Uterus (tissue), 4 donors: ENCODE measurements at regions of chr4 and their contacts with region 1.

Region 1: GRCh38 chr4:82900331-82901128 is at the start of gene THAP9:
- DNase-seq: peak; percentile 97 to 98
- H3K4me3 ChIP-seq: peak within 1 kb of the TSS; percentile 68 to 76
- H3K27ac ChIP-seq: peak within 1 kb of the TSS; percentile 97 to 99
- H3K4me1 ChIP-seq: peaks cover 0 to 4% of the 10 kb centered on the region in 2 donors
- H3K27me3 ChIP-seq: no peaks in the 10 kb centered on the region
- CTCF ChIP-seq: peak in 1 of 4 experiments; percentile 11
- POLR2A ChIP-seq: peak; percentile 61 to 75
- total RNA-seq, gene THAP9: 2.3 to 26.9 (median 6.5) TPM

Region 2: GRCh38 chr4:83012687-83013419 is 112.3 kb after region 1 on chr4:
- intact Hi-C with region 1: loop called (anchors 5 kb)
- DNase-seq: peak; percentile 96 to 98
- H3K4me3 ChIP-seq: peak overlapping the region; percentile 36 to 77
- H3K27ac ChIP-seq: peak overlapping the region; percentile 83 to 86
- H3K4me1 ChIP-seq: peaks cover 0 to 3% of the 10 kb centered on the region in 2 donors
- H3K27me3 ChIP-seq: no peaks in the 10 kb centered on the region
- CTCF ChIP-seq: peak; percentile 23 to 70 (median 58)
- POLR2A ChIP-seq: peak; percentile 45 to 50

Region 3: GRCh38 chr4:83083925-83084475 is 183.5 kb after region 1 on chr4:
- intact Hi-C with region 1: no loop called
- DNase-seq: no peak
- H3K4me3 ChIP-seq: no peak overlapping the region
- H3K27ac ChIP-seq: no peak overlapping the region
- H3K4me1 ChIP-seq: no peaks in the 10 kb centered on the region
- H3K27me3 ChIP-seq: no peaks in the 10 kb centered on the region
- CTCF ChIP-seq: no peak
- POLR2A ChIP-seq: no peak